CD4-positive, alpha-beta memory T cell (primary cell): ENCODE measurements at regions of chr2 and their contacts with region 1.

Region 1: GRCh38 chr2:219294356-219295351 is 14.5 kb downstream of the PTPRN start:
- DNase-seq: peak; percentile 84 to 91 (median 88)
- H3K4me3 ChIP-seq: peak overlapping the region; percentile 11 to 17
- H3K4me3 Mint-ChIP-seq: peak overlapping the region; percentile 59 to 84 (median 78)
- H3K27ac ChIP-seq: peak overlapping the region; percentile 33
- H3K27ac Mint-ChIP-seq: peak overlapping the region; percentile 70 to 94 (median 88)
- H3K4me1 ChIP-seq: peaks cover 12% of the 10 kb centered on the region
- H3K4me1 Mint-ChIP-seq: peaks cover 6 to 21% (median 11%) of the 10 kb centered on the region in 4 donors
- H3K27me3 ChIP-seq: no peaks in the 10 kb centered on the region
- H3K27me3 Mint-ChIP-seq: peaks cover 4 to 6% of the 10 kb centered on the region in 2 donors

Region 2: DNA sequence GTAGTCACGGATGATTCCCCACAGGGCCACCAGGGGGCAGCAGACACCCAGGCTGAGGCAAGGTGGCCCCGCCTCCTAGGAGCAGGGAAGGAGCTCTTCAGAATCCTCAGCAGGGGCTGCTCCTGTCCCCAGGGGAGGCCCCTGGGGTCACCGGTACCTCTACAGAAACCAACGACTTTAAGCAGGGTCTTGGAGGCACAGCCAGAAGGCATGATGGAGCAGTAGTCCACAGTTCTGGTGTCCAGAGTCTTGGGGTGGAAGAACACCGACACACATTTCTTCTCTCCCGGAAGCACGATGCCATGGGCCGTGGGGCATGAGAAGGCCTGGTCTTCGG is 264.9 kb before region 1 on chr2:
- CTCF ChIA-PET with region 1: interaction called, 5 read pairs
- POLR2A ChIA-PET with region 1: no interaction called
- intact Hi-C with region 1: loop called (anchors 1 kb)
- DNase-seq: peak; percentile 69 to 76 (median 73)
- H3K4me3 ChIP-seq: no peak overlapping the region
- H3K4me3 Mint-ChIP-seq: no peak overlapping the region
- H3K27ac ChIP-seq: no peak overlapping the region
- H3K27ac Mint-ChIP-seq: peak overlapping the region in 1 of 7 donors; percentile 21
- H3K4me1 ChIP-seq: no peaks in the 10 kb centered on the region
- H3K4me1 Mint-ChIP-seq: peaks cover 0 to 1% (median 0%) of the 10 kb centered on the region in 4 donors
- H3K27me3 ChIP-seq: no peaks in the 10 kb centered on the region
- H3K27me3 Mint-ChIP-seq: peaks cover 16 to 21% of the 10 kb centered on the region in 2 donors

Region 3: GRCh38 chr2:219171231-219171651 is 123.4 kb before region 1 on chr2:
- CTCF ChIA-PET with region 1: interaction called, 50 read pairs
- POLR2A ChIA-PET with region 1: interaction called, 27 read pairs
- intact Hi-C with region 1: loop called (anchors 1 kb)
- DNase-seq: peak; percentile 39 to 58 (median 49)
- H3K4me3 ChIP-seq: no peak overlapping the region
- H3K4me3 Mint-ChIP-seq: peak overlapping the region in 1 of 8 donors; percentile 25
- H3K27ac ChIP-seq: no peak overlapping the region
- H3K27ac Mint-ChIP-seq: peak overlapping the region; percentile 35 to 91 (median 75)
- H3K4me1 ChIP-seq: peaks cover 31% of the 10 kb centered on the region
- H3K4me1 Mint-ChIP-seq: peaks cover 15 to 46% (median 31%) of the 10 kb centered on the region in 4 donors
- H3K27me3 ChIP-seq: no peaks in the 10 kb centered on the region
- H3K27me3 Mint-ChIP-seq: no peaks in the 10 kb centered on the region

Region 4: GRCh38 chr2:219206442-219207253 is 88.0 kb before region 1 on chr2 and contains the start of gene ZFAND2B:
- CTCF ChIA-PET with region 1: interaction called, 22 read pairs
- POLR2A ChIA-PET with region 1: interaction called, 9 read pairs
- intact Hi-C with region 1: loop called (anchors 1 kb)
- DNase-seq: peak; percentile 93 to 98 (median 95)
- H3K4me3 ChIP-seq: peak within 1 kb of the TSS; percentile 67 to 88
- H3K4me3 Mint-ChIP-seq: peak within 1 kb of the TSS; percentile 88 to 95 (median 94)
- H3K27ac ChIP-seq: peak within 1 kb of the TSS; percentile 87
- H3K27ac Mint-ChIP-seq: peak within 1 kb of the TSS; percentile 93 to 98 (median 97)
- H3K4me1 ChIP-seq: peaks cover 39% of the 10 kb centered on the region
- H3K4me1 Mint-ChIP-seq: peaks cover 22 to 54% (median 37%) of the 10 kb centered on the region in 4 donors
- H3K27me3 ChIP-seq: no peaks in the 10 kb centered on the region
- H3K27me3 Mint-ChIP-seq: no peaks in the 10 kb centered on the region
- total RNA-seq, gene ZFAND2B: 73.3 to 79.8 TPM

Region 5: DNA sequence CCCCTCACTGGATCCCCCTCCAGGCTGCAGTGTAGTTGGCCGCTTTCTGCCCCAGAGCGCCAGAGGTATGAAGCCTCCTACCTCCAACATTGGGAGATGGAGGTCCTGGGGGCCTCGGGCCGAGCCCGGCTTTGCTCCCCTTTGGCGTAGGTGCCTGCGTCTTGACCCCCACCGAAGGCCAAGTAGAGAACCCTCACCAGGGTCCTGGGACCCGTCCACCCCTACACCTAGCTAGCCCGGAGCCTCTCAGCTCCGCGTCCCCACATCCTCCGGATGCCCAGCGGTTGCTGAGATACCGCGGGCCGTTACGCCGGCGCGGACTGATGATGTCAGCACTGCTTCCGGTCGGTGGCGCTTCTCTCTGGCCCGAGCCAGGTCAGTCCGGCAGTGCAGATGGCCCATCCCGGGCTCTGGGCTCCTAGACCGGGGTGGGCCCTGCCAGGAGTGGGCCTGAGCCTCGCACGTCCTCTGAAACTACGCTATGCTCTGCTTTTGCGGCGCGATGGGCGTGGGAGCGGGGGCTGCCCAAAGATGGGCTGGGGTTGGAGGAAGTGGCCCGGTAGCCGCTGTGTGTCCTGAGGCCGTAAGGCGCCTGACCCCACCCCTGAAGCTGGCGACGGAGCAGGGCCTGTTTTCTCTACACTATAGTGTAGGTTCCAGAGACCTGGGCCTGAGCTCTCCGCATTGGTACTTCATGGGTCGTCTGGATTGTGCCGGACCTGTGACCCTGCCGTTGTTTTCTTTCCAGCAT is 49.3 kb before region 1 on chr2 and contains the starts of genes GLB1L and STK16:
- CTCF ChIA-PET with region 1: interaction called, 150 read pairs
- POLR2A ChIA-PET with region 1: interaction called, 35 read pairs
- intact Hi-C with region 1: no loop called
- DNase-seq: peak; percentile 85 to 88 (median 86)
- H3K4me3 ChIP-seq: peak within 1 kb of the TSS; percentile 45 to 97
- H3K4me3 Mint-ChIP-seq: peak within 1 kb of the TSS; percentile 85 to 99 (median 94)
- H3K27ac ChIP-seq: peak within 1 kb of the TSS; percentile 94
- H3K27ac Mint-ChIP-seq: peak within 1 kb of the TSS; percentile 96 to 99 (median 99)
- H3K4me1 ChIP-seq: peaks cover 59% of the 10 kb centered on the region
- H3K4me1 Mint-ChIP-seq: peaks cover 39 to 80% (median 56%) of the 10 kb centered on the region in 4 donors
- H3K27me3 ChIP-seq: no peaks in the 10 kb centered on the region
- H3K27me3 Mint-ChIP-seq: no peaks in the 10 kb centered on the region
- total RNA-seq, gene GLB1L: 1.5 to 2.5 TPM
- total RNA-seq, gene STK16: 19.3 to 21.1 TPM

Region 6: GRCh38 chr2:219278655-219279516 is 15.8 kb before region 1 on chr2 and contains the start of gene DNAJB2:
- CTCF ChIA-PET with region 1: interaction called, 208 read pairs
- POLR2A ChIA-PET with region 1: interaction called, 119 read pairs
- intact Hi-C with region 1: loop called (anchors 1 kb)
- DNase-seq: peak; percentile 98 to 100 (median 99)
- H3K4me3 ChIP-seq: peak within 1 kb of the TSS; percentile 48 to 71
- H3K4me3 Mint-ChIP-seq: peak within 1 kb of the TSS; percentile 88 to 98 (median 96)
- H3K27ac ChIP-seq: peak within 1 kb of the TSS; percentile 98
- H3K27ac Mint-ChIP-seq: peak within 1 kb of the TSS; percentile 96 to 100 (median 100)
- H3K4me1 ChIP-seq: peaks cover 40% of the 10 kb centered on the region
- H3K4me1 Mint-ChIP-seq: peaks cover 17 to 51% (median 40%) of the 10 kb centered on the region in 4 donors
- H3K27me3 ChIP-seq: no peaks in the 10 kb centered on the region
- H3K27me3 Mint-ChIP-seq: no peaks in the 10 kb centered on the region
- total RNA-seq, gene DNAJB2: 110 to 117 TPM

Region 7: DNA sequence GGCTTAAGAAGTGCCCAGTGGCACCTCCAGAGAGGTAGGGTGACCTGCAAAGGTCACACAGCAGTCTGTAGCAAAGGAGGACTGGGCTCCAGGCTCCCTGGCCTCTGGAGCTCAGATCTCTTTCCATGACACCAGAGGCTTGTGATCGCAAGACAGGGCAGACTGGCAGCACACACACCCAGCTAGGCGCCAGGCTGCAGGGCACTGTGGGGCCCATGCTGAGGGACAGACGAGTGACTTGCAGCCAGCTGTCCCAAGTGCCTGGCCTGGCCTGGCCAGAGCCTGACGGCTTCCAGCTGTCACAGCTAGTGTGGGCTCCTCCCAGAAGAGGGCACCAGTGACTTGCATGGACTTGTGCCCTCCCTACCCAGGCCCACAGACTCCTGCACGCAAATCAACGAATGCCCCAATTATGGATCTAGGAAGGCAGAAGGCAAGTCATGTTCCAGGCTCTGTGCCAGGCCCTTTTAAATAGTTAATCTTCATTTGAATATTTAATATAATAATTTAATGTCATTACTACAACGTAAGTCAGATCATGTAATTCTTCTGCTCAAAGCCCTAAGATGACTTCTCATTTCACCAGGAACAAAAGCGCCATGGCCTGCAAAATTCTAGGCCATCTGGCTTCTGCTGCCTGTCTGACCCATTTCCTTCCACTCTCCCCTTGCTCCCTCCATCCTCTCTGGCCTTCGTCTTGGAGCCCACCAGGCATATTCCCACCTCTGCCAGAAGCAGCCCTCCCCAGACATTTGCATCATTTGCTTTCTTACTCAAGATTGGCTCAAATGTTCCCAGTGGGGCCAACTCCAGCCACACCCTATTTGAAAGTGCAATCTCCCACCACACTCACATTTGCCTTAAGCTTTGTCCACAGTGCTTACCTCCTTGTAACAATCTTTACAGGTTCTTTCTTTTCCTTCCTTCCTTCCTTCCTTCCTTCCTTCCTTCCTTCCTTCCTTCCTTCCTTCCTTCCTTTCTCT is 136.3 kb after region 1 on chr2:
- CTCF ChIA-PET with region 1: no interaction called
- POLR2A ChIA-PET with region 1: no interaction called
- intact Hi-C with region 1: no loop called
- DNase-seq: no peak
- H3K4me3 ChIP-seq: no peak overlapping the region
- H3K4me3 Mint-ChIP-seq: peak overlapping the region in 1 of 8 donors; percentile 7
- H3K27ac ChIP-seq: no peak overlapping the region
- H3K27ac Mint-ChIP-seq: peak overlapping the region in 1 of 7 donors; percentile 27
- H3K4me1 ChIP-seq: no peaks in the 10 kb centered on the region
- H3K4me1 Mint-ChIP-seq: peaks cover 0 to 7% (median 3%) of the 10 kb centered on the region in 4 donors
- H3K27me3 ChIP-seq: peaks cover 7% of the 10 kb centered on the region
- H3K27me3 Mint-ChIP-seq: peaks cover 6 to 15% of the 10 kb centered on the region in 2 donors